PC-3 (cell line): ENCODE measurements at regions of chr11 and their contacts with region 1.

Region 1: DNA sequence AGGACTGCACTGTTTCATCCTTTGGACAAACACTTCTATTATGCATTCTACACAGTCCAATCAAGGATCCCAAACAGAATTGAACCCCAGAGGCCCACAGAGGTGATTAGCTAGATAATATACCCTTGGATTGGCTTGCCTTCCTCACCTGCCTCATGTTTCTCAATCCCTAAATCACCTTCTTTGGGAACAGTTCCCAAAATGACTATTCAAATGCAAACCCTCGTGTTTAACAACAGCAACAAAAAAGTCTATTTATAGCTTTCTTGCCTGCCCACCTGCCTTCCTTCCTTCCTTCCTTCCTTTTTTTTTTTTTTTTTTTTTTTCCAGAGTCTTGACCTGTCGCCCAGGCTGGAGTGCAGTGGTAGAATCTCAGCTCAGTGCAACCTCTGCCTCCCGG is 180.0 kb downstream of the CNTN5 start:
- DNase-seq: no peak
- ATAC-seq: no peak
- H3K4me3 ChIP-seq: no peak overlapping the region
- H3K27ac ChIP-seq: no peak overlapping the region
- H3K4me1 ChIP-seq: 0 out of 2 replicates have a peak, but pooled peaks cover 4% of the 10 kb centered on the region
- H3K27me3 ChIP-seq: no peaks in the 10 kb centered on the region
- CTCF ChIP-seq: no peak

Region 2: DNA sequence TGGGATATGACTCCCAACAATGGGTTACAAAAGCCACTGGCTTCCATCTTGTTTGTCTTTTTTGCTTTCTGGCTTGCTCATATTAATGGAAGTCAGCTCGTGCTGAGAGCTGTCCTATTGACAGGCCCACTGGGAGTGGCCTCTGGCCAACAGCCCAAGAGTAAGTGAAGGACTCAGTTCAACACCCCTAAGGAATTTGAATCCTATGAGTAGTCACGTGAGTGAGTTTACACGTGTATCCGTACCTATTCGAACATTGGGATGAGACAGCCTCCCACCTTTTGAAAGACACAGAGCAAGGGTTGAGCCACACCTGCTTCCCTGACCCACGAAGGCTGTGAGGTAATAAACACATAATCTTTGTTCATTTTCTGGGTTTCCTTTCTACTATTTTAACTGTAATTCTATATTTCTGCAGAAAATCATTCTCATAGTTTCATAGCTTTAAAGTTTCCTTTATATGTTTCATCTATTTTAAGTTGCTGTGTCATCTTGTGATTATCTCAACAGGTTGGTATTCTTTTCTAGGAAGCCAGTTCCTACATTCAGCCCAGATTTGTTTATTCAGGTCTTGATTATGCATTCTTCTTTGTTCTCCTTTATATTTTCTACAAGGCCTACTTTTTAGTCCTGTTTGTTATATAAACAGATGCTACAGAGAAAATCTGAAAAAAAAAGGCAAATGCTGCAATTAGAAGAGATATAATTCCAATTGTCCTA is 622.3 kb after region 1 on chr11:
- CTCF ChIA-PET with region 1: interaction called, 10 read pairs
- POLR2A ChIA-PET with region 1: no interaction called
- intact Hi-C with region 1: no loop called
- DNase-seq: no peak
- ATAC-seq: no peak
- H3K4me3 ChIP-seq: no peak overlapping the region
- H3K27ac ChIP-seq: no peak overlapping the region
- H3K4me1 ChIP-seq: no peaks in the 10 kb centered on the region
- H3K27me3 ChIP-seq: peaks cover 26% of the 10 kb centered on the region
- CTCF ChIP-seq: no peak